A549 (cell line): ENCODE measurements at regions of chr6 and their contacts with region 1.

Region 1: DNA sequence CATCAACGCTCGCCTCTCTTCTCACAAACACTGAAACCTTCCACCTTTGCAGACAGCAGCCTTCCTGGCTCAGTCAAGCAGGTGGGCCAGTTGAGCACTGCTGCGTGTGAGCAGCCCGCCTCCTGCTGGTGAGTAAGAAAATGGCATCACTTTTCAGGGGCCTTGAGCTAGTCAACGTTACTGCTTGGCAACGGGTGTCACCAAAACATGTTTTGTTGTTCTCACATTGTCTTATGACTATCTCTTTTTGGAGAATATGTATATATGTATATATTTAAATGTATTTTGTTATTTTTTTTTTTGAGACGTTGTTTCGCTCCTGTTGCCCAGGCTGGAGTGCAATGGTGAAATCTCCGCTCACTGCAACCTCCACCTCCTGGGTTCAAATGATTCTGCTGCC is 97.0 kb upstream of the AGPAT4 start:
- DNase-seq: peak; percentile 50 to 76
- ATAC-seq: peak; percentile 72 to 85
- H3K4me3 ChIP-seq: no peak overlapping the region
- H3K27ac ChIP-seq: no peak overlapping the region
- H3K4me1 ChIP-seq: peaks cover 8% of the 10 kb centered on the region; the same call in 1 of the 3 replicates
- CTCF ChIP-seq: peak; percentile 79
- EP300 ChIP-seq: no peak
- POLR2A ChIP-seq: no peak
- RAD21 ChIP-seq: peak; percentile 83 to 89

Region 2: GRCh38 chr6:160733050-160733646 is 637.7 kb before region 1 on chr6:
- CTCF ChIA-PET with region 1: interaction called, 33 read pairs
- POLR2A ChIA-PET with region 1: no interaction called
- DNase-seq: peak; percentile 7 to 47
- ATAC-seq: peak; percentile 77 to 93; a peak in 5 of 6 replicates
- H3K4me3 ChIP-seq: no peak overlapping the region
- H3K27ac ChIP-seq: no peak overlapping the region
- H3K4me1 ChIP-seq: no peaks in the 10 kb centered on the region
- CTCF ChIP-seq: peak; percentile 47
- EP300 ChIP-seq: no peak
- POLR2A ChIP-seq: no peak
- RAD21 ChIP-seq: peak; percentile 52 to 67; a peak in 4 of 5 replicates

Region 3: GRCh38 chr6:160750276-160750689 is 620.6 kb before region 1 on chr6:
- CTCF ChIA-PET with region 1: interaction called, 21 read pairs
- POLR2A ChIA-PET with region 1: no interaction called
- DNase-seq: peak in 1 of 2 experiments; percentile 13
- ATAC-seq: peak; percentile 50 to 70; a peak in 4 of 6 replicates
- H3K4me3 ChIP-seq: no peak overlapping the region
- H3K27ac ChIP-seq: no peak overlapping the region
- H3K4me1 ChIP-seq: no peaks in the 10 kb centered on the region
- CTCF ChIP-seq: peak; percentile 32; the same call in 2 of the 3 replicates
- EP300 ChIP-seq: no peak
- POLR2A ChIP-seq: no peak
- RAD21 ChIP-seq: peak; percentile 51 to 72

Region 4: DNA sequence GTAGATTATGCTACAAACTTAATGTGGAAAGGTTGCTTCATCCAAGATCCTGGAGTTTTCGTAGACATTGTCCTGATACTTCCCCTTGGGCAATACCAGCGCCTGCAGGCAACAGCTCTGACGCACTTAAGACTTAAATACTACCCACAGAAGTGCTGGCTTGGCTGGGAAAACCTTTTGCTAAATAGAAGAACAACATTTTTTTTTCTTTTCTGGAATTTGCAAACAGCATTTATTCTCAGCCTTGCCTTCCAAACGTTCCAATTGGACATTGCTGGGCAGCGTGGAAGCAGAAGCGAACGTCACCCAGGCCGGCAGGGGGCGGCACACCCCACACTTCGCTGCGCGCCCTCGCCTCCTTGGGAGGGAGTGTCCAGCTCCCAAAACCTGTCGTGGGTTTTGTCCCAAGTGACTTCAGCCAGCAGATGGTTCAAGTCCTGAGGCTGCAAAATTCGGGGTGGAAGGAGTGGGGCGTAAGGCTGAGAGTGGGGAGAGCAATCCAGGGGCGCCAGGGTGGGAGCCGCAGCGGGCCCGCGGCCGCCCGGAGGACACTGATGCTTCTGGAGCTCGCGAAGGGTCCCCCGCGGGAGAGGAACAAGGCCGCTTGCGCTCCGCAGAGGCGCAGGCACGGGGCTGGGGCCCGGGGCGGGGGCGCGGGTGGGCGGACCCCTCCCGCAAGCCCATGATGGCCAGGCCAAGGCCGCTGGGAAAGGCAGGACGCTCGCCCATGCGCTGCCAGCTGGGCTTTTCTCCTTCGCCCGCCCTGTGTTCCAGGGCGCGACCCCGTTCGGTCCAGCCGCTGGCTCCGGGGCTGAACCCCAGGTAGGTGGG is 440.1 kb before region 1 on chr6:
- CTCF ChIA-PET with region 1: interaction called, 223 read pairs
- POLR2A ChIA-PET with region 1: no interaction called
- DNase-seq: peak; percentile 58 to 72
- ATAC-seq: peak; percentile 96 to 99
- H3K4me3 ChIP-seq: peak overlapping the region; percentile 41
- H3K27ac ChIP-seq: peak overlapping the region; percentile 23 to 60; a peak in 4 of 6 replicates
- H3K4me1 ChIP-seq: no peaks in the 10 kb centered on the region
- CTCF ChIP-seq: peak; percentile 75
- EP300 ChIP-seq: no peak
- POLR2A ChIP-seq: no peak
- RAD21 ChIP-seq: peak; percentile 83 to 89

Region 5: GRCh38 chr6:161101517-161101916 is 269.4 kb before region 1 on chr6:
- CTCF ChIA-PET with region 1: interaction called, 16 read pairs
- POLR2A ChIA-PET with region 1: no interaction called
- DNase-seq: no peak
- ATAC-seq: 0 out of 6 replicates have a peak, but pooled peaks of 1 of the 2 experiments have one; percentile 37
- H3K4me3 ChIP-seq: no peak overlapping the region
- H3K27ac ChIP-seq: no peak overlapping the region
- H3K4me1 ChIP-seq: no peaks in the 10 kb centered on the region
- CTCF ChIP-seq: no peak
- EP300 ChIP-seq: no peak
- POLR2A ChIP-seq: no peak
- RAD21 ChIP-seq: 0 out of 5 replicates have a peak, but pooled peaks have one; percentile 10 to 20

Region 6: DNA sequence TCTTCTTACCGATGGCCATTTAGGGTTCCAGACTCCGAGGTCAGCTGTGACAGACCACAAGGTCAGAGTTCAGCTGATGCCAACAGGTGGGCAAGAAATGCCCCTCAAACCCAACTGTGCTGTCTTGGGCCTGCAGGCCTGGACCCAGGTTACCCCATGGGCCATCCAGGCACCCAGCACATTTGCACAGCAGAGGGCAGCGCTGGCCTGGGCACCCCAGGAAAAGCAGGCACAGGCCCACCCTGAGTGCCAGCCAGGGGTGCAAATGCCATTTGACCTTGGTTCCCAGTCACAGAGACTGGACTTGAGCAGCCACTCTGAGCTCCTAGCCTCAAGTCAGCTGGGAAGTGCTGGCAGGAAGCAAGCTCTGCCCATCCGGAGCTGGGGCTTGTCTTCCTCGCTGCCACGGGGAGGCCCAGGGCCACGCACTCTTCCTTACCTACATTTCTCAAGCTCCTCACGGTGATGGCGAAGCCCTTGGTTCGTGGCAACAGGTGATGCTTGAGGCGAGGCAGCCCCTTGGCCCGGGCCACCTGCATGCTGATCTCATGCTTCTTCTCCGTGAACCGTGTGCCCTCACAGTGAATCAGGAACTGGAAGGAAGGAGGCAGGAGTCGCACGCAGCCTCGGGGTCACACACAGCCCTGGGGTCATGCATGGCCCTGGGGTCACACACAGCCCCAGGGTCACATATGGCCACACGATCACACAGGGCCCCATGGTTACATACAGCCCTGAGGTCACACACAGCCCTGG is 217.8 kb before region 1 on chr6:
- CTCF ChIA-PET with region 1: interaction called, 87 read pairs
- POLR2A ChIA-PET with region 1: no interaction called
- DNase-seq: peak in 1 of 2 experiments; percentile 6
- ATAC-seq: peak in 1 of 2 experiments; percentile 85; a peak in 3 of 6 replicates
- H3K4me3 ChIP-seq: no peak overlapping the region
- H3K27ac ChIP-seq: no peak overlapping the region
- H3K4me1 ChIP-seq: no peaks in the 10 kb centered on the region
- CTCF ChIP-seq: peak; percentile 41
- EP300 ChIP-seq: no peak
- POLR2A ChIP-seq: no peak
- RAD21 ChIP-seq: peak; percentile 67 to 71

Region 7: DNA sequence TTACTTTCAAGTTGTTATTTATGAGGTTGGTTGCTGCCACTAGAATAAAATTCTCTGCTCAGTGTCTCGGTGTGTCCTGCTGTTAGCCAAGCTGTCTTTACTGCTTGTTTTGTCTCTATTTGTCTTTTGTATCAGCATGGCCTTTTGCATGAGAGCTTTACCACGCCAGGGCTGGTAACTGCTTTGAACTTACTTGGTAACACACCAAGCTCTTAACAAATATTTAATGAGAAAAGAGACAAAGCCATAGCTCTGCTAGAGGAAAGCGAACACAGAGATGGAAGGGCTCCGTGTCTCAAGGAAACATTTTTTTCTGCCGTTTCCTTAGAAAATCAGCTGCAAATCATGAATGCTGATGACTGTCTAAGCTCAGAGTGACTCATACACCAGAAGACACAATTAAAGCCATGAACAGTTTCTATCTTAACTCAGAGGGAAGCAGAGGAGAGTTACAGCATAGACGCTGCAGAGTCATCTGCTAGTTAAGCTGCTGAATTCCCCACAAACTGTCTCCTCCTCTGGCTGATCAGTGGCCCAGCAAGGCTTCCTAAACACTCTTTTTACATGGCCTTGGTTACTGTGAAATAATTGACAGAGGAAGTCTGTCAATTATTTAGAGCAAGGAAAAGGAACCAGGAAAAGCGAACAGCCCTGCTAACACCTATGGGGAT is 141.8 kb before region 1 on chr6:
- CTCF ChIA-PET with region 1: no interaction called
- POLR2A ChIA-PET with region 1: no interaction called
- DNase-seq: no peak
- ATAC-seq: peak in 1 of 2 experiments; percentile 31; a peak in 2 of 6 replicates
- H3K4me3 ChIP-seq: no peak overlapping the region
- H3K27ac ChIP-seq: peak overlapping the region in 1 of 2 experiments; percentile 24; a peak in 1 of 6 replicates
- H3K4me1 ChIP-seq: peaks cover 5% of the 10 kb centered on the region; the same call in 1 of the 3 replicates
- CTCF ChIP-seq: no peak
- EP300 ChIP-seq: no peak
- POLR2A ChIP-seq: no peak
- RAD21 ChIP-seq: no peak

Region 8: DNA sequence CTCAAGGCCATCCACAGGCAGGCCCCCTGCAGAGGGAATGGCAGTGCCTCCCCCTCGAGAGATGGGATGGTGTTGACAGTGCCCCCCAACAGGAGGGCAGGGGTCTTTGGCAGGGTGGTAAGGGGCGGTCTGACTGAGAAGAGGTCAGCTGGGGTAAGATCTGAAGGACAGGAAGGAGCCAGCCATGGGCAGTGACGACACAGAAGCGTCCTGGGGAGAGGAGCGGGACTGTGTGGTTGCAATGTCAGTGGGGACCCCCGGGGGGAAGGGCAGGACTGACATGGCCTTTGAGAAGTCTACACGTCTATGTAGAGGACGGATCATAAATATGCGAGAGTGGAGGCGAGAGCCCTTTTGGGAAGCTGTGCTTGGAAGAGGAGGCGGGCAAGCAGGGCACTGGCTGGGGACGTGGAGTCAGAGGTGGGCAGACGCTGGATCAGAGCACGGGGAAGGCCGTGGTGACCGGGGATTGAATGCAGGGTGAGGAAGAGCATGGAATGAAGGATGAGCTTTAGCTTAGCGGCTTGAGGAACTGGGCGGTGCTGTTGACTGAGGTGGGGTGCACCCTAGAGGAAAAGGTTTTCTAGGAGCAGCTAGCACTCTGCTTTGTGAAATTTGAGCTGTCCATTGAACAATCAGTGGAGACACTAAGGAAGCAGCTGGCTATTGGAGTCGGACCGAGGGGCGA is 14.6 kb before region 1 on chr6:
- CTCF ChIA-PET with region 1: interaction called, 25 read pairs
- POLR2A ChIA-PET with region 1: no interaction called
- DNase-seq: no peak
- ATAC-seq: no peak
- H3K4me3 ChIP-seq: no peak overlapping the region
- H3K27ac ChIP-seq: no peak overlapping the region
- H3K4me1 ChIP-seq: no peaks in the 10 kb centered on the region
- CTCF ChIP-seq: no peak
- EP300 ChIP-seq: no peak
- POLR2A ChIP-seq: no peak
- RAD21 ChIP-seq: no peak

Region 9: DNA sequence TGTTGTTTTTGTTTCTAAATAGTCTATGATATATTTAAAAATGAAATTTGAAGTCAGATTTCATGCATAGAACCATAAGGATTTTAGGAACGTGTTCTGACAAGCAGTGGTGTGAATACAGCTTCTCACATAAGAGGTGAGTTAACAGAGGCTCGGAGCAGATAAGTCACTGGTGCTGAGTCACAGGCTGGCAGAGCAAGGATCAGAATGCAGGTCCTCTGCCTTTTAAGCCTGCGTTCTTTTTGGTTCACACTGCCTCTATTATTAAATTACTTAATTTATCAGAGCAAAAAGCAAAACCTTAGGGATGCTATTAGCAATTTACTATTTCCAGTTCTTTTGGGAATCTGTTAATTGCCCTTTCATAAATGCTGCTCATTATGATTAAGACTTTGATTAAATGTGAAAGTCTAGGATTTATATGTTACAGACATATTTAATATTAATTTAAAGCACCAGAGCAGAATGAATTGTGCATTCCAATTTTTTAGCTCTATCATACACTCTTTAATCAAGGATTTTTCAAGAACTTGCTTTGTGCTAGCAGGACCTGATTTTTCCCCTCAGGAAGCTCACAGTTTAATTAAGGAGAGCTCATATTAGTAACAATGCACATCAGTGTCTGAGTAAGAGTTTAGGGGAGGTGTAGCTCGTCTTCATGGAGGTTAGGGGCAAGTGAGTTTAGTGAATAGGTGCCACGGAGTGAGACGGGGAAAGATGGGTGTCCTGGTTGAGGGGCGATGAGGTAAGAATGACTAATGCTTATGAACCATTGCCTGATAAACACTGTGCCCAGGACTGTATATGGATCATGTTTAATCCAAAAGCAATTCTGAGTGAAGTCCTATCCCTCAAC is 115.7 kb after region 1 on chr6:
- CTCF ChIA-PET with region 1: no interaction called
- POLR2A ChIA-PET with region 1: no interaction called
- DNase-seq: peak; percentile 39 to 64
- ATAC-seq: peak; percentile 94 to 98
- H3K4me3 ChIP-seq: no peak overlapping the region
- H3K27ac ChIP-seq: peak overlapping the region; percentile 76 to 87
- H3K4me1 ChIP-seq: peaks cover 31% of the 10 kb centered on the region
- CTCF ChIP-seq: no peak
- EP300 ChIP-seq: no peak
- POLR2A ChIP-seq: no peak
- RAD21 ChIP-seq: no peak